Endothelial cell of umbilical vein (primary cell): ENCODE measurements at regions of chrX and their contacts with region 1.

Region 1: DNA sequence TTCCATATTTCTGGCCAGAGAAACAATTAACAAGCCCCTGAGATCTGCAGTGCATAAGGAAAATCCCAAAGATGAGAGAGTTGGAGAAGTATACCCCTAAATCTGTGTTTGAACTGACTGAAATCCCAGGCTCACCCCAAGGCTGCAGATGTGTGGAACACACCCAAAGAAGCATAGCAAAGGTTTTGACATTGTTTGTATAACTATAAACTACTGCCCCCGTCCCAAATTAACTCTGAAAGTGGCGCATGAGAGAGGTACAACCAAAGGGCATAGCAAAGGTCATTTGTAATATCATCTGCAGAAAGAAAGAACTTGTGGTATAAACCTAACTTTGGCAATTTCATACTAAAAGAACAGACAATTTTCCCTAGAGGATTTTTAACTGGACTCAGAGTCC is 157.9 kb downstream of the DCAF12L1 start:
- DNase-seq: no peak
- H3K4me3 ChIP-seq: no peak overlapping the region
- H3K27ac ChIP-seq: no peak overlapping the region
- H3K4me1 ChIP-seq: no peaks in the 10 kb centered on the region
- H3K27me3 ChIP-seq: no peaks in the 10 kb centered on the region
- CTCF ChIP-seq: no peak
- POLR2A ChIP-seq: no peak

Region 2: DNA sequence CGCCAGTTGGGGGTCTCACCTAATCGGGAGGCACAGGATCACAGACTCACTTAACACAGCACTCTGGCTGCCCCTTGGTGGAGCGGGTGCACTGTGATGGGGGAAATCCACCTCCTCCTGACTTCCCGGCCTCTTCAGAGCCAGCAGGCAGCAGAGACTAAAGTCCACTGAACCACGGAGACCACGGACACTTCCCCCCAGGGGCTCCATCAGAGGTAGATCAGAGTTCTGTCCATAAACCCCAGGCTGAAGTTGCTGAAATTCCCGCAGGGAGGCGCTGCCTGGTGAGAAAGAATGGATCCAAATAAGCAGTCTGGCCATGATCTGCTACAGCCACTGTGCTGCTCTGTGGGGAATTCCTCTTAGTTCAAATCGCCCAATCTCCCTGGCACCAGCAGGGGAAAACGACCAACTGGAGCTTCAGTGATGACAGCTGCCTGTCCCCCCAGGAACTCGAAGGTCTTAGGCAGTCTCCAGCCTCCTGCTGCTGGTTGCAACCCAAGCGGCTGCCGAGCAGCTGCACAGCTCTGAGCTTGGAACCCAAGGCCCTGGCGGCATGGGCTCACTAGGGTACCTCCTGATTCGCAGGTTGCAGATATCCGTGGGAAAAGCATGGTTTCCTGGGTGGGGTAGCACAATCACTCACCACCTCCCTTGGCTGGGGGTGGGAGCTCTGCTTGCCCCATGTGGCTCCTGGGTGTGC is 121.7 kb before region 1 on chrX:
- CTCF ChIA-PET with region 1: no interaction called
- POLR2A ChIA-PET with region 1: no interaction called
- dilution Hi-C with region 1: no loop called
- intact Hi-C with region 1: no loop called
- DNase-seq: no peak
- H3K4me3 ChIP-seq: no peak overlapping the region
- H3K27ac ChIP-seq: no peak overlapping the region
- H3K4me1 ChIP-seq: no peaks in the 10 kb centered on the region
- H3K27me3 ChIP-seq: no peaks in the 10 kb centered on the region
- CTCF ChIP-seq: no peak
- POLR2A ChIP-seq: no peak

Region 3: DNA sequence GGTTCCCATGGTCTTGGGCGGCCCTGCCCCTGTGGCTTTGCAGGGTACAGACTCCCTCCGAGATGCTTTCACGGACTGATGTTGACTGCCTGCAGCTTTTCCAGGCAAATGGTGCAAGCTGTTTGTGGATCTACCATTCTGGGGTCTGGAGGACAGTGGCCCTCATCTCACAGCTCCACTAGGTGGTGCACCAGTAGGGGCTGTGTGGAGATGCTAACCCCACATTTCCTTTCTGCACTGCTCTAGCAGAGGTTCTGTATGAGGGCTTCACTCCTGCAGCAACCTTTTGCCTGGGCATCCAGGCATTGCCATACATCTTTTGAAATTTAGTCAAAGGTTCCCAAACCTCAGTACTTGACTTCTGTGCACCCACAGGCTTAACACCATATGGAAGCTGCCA is 18.2 kb before region 1 on chrX:
- CTCF ChIA-PET with region 1: no interaction called
- POLR2A ChIA-PET with region 1: no interaction called
- dilution Hi-C with region 1: no loop called
- intact Hi-C with region 1: loop called (anchors 2 kb)
- DNase-seq: no peak
- H3K4me3 ChIP-seq: no peak overlapping the region
- H3K27ac ChIP-seq: no peak overlapping the region
- H3K4me1 ChIP-seq: no peaks in the 10 kb centered on the region
- H3K27me3 ChIP-seq: no peaks in the 10 kb centered on the region
- CTCF ChIP-seq: no peak
- POLR2A ChIP-seq: no peak